ENCODE measurements at regions of chr15 and their contacts with region 1.

Region 1: DNA sequence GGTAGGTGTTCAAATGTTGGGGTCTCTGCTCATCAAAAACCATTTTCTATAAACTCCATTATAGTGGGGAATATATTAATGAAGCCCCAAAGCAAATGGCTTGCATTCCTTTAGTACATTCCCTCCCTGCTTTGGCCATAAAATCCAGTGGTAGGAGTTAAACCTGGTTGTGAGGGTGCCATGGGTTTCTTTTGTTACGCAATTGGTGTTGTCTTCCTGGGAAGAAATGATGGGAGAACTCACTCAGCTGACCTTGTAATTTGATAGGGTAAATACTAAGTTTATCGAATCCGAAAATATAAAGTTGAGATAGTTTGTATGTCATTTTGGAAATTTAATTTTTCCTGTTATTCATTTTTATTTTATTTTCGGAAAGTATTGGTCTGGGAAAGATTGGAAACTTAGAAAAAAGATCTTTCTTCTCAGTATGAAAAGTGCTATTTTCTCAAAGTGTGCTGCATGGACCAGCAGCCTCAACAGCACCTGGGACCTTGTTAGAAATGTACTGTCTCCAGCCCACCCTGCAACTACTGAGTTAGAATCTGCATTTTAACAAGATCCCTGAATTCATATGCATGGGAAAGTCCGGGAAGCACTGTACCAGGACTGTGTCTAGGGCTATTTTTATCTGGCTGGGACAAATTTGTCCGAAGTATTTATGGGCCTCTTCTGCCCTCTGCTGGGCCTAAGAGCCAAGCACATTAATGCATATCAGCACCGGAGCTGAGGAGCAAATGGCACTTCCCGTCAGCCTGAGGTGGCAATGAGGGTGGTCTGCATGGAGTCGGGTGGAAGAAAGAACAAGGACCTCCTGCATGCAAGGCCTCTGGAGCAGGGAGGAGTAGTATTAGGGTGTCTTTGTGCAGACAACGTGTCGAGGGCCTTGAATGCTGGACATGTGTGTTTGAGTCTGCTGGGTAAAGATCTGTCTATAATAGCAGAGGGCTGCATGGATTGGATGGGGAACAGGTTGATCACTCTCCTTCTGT is 54.7 kb downstream of the FAM81A start:
- DNase-seq: peak; percentile 70
- ATAC-seq: peak; percentile 99
- H3K4me3 ChIP-seq: no peak overlapping the region
- H3K27ac ChIP-seq: no peak overlapping the region
- H3K4me1 ChIP-seq: no peaks in the 10 kb centered on the region
- H3K27me3 ChIP-seq: no peaks in the 10 kb centered on the region; the same call in 1 of the 2 replicates
- CTCF ChIP-seq: peak; percentile 92
- POLR2A ChIP-seq: 0 out of 2 replicates have a peak, but pooled peaks have one; percentile 27
- RAD21 ChIP-seq: peak; percentile 94

Region 2: GRCh38 chr15:58227706-58228543 is 1264.8 kb before region 1 on chr15:
- CTCF ChIA-PET with region 1: no interaction called
- POLR2A ChIA-PET with region 1: no interaction called
- dilution Hi-C with region 1: no loop called
- in situ Hi-C with region 1: loop called (anchors 25 kb)
- intact Hi-C with region 1: loop called (anchors 2 kb)
- DNase-seq: peak; percentile 84
- ATAC-seq: peak; percentile 76
- H3K4me3 ChIP-seq: no peak overlapping the region
- H3K27ac ChIP-seq: no peak overlapping the region
- H3K4me1 ChIP-seq: peaks cover 14% of the 10 kb centered on the region
- H3K27me3 ChIP-seq: no peaks in the 10 kb centered on the region
- CTCF ChIP-seq: peak; percentile 95
- POLR2A ChIP-seq: 0 out of 2 replicates have a peak, but pooled peaks have one; percentile 41
- RAD21 ChIP-seq: peak; percentile 99

Region 3: DNA sequence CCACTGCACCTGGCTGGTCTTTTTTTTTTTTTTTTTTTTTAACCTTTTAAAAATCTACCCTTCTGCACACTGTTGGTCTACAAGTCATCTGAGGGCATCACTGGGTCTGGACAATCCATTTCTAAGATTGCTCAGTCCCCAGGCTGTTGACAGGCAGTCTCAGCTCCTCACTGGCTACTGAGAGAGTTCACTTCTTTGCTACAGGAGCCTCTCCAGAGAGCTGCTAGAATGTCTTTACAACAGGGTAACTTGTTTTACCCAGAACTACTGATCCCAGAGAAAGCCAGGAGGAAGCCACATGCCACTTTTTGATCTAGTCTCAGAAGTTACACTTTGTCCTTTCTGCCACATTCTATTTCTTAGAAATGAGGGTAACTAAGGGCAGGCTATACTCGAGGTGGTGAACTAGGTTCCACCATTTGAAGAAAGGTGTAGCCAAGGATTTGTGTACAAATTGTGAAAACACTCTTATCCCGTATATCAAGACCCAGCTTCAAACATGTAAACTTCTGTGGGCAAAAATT is 393.5 kb before region 1 on chr15:
- CTCF ChIA-PET with region 1: no interaction called
- POLR2A ChIA-PET with region 1: no interaction called
- dilution Hi-C with region 1: no loop called
- in situ Hi-C with region 1: no loop called
- intact Hi-C with region 1: loop called (anchors 5 kb)
- DNase-seq: no peak
- ATAC-seq: no peak
- H3K4me3 ChIP-seq: no peak overlapping the region
- H3K27ac ChIP-seq: no peak overlapping the region
- H3K4me1 ChIP-seq: no peaks in the 10 kb centered on the region
- H3K27me3 ChIP-seq: no peaks in the 10 kb centered on the region
- CTCF ChIP-seq: no peak
- POLR2A ChIP-seq: no peak
- RAD21 ChIP-seq: no peak

Region 4: DNA sequence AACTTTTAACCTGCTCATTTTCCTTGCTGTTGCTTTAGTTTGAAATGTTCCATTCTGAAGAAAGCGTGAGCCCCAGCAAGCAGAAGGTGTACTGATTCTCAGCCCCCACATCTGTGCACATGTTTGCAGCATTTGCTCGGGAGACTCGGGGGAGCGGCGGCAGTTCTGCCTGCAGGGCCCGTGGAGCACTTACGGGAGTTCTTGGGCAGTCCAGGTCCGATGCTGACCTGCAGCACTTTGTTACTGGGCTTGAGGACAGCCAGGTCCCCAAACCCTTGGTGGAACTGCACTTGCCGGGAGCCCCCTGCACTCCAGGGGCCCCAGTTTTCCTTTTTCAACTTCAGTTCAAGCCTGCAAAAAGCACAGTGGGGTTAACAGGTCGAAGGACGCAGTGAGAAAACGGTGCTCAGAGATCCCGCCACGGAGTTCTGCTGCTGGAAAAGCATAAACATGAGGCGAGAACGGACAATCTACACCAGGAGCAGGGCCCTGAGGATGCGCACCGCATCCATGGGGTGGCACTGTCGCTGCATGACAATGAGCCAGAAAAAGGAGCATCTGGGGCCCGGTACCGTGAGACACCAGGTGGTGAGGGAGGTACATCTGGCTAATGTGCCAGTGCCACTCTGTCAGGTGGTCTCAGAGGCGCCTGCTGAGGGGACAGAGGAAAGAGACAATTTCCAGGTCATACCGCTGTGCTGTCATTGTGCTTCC is 331.6 kb before region 1 on chr15:
- CTCF ChIA-PET with region 1: interaction called, 3 read pairs
- POLR2A ChIA-PET with region 1: no interaction called
- dilution Hi-C with region 1: no loop called
- in situ Hi-C with region 1: no loop called
- intact Hi-C with region 1: loop called (anchors 1 kb)
- DNase-seq: peak; percentile 20
- ATAC-seq: peak; percentile 56
- H3K4me3 ChIP-seq: no peak overlapping the region
- H3K27ac ChIP-seq: no peak overlapping the region
- H3K4me1 ChIP-seq: peaks cover 5% of the 10 kb centered on the region
- H3K27me3 ChIP-seq: no peaks in the 10 kb centered on the region
- CTCF ChIP-seq: peak; percentile 53
- POLR2A ChIP-seq: no peak
- RAD21 ChIP-seq: peak; percentile 70

Region 5: DNA sequence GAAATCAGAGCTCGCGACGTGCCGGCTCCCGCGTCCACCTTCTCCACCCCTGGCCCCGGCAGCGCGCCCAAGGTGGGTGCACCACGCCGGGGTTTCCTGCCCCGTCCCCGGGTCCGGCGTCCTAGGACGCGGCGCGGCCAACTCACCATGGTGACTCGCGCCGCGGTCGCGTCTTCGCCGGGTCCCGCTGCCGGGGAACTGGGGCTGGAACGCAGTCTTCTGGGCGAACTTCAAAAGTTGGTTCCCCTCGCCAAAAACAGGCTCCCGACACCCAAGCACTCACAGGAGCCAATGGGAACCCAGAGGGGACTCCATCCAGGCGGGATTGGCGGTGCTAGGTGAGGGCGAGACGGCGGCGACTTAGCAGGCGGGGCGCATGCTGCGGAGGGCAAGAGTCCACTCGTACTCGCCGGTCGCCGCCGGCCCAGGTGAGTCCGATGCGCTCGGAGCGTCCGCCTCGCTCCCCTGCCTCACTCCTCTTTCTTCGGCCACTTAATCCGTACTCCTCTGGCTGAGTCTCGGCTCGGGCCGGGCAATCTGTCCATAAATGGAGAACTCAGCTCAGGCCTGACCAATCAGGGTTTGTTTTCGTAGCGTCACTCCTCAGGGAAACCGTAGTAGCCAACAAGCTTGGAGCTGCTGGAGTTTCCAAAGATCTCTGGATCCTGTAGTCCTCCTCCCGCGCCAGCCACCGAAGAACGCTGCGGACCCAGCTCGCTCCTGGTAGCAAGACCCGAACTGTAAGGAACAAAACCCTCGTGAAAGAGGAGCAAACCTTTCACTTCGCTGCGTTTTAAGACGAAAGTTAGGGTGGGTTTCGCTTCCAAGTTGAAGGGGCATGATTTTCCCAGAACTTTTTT is 120.1 kb before region 1 on chr15 and contains the start of gene MYO1E:
- CTCF ChIA-PET with region 1: no interaction called
- POLR2A ChIA-PET with region 1: no interaction called
- dilution Hi-C with region 1: no loop called
- in situ Hi-C with region 1: no loop called
- intact Hi-C with region 1: loop called (anchors 1 kb)
- DNase-seq: peak; percentile 97
- ATAC-seq: peak; percentile 94
- H3K4me3 ChIP-seq: peak within 1 kb of the TSS; percentile 67
- H3K27ac ChIP-seq: peak within 1 kb of the TSS; percentile 88
- H3K4me1 ChIP-seq: peaks cover 3% of the 10 kb centered on the region; the same call in 1 of the 2 replicates
- H3K27me3 ChIP-seq: no peaks in the 10 kb centered on the region
- CTCF ChIP-seq: no peak
- POLR2A ChIP-seq: peak; percentile 88
- RAD21 ChIP-seq: no peak
- total RNA-seq, gene MYO1E: 35.8 and 37.3 TPM in 2 replicates

Region 6: GRCh38 chr15:59656897-59657634 is 164.4 kb after region 1 on chr15 and contains the start of gene GTF2A2:
- CTCF ChIA-PET with region 1: no interaction called
- POLR2A ChIA-PET with region 1: no interaction called
- dilution Hi-C with region 1: no loop called
- in situ Hi-C with region 1: no loop called
- intact Hi-C with region 1: no loop called
- DNase-seq: peak; percentile 92
- ATAC-seq: peak; percentile 99
- H3K4me3 ChIP-seq: peak within 1 kb of the TSS; percentile 66
- H3K27ac ChIP-seq: peak within 1 kb of the TSS; percentile 75
- H3K4me1 ChIP-seq: no peaks in the 10 kb centered on the region; the same call in 1 of the 2 replicates
- H3K27me3 ChIP-seq: no peaks in the 10 kb centered on the region
- CTCF ChIP-seq: no peak
- POLR2A ChIP-seq: peak; percentile 88
- RAD21 ChIP-seq: no peak
- total RNA-seq, gene GTF2A2: 10.2 and 23.6 TPM in 2 replicates